ENCODE measurements at regions of chr12 and their contacts with region 1.

Region 1: GRCh38 chr12:19431407-19432308 is 7.6 kb upstream of the AEBP2 start:
- DNase-seq: peak; percentile 78
- H3K4me3 Mint-ChIP-seq: no peak overlapping the region
- H3K27ac Mint-ChIP-seq: peak overlapping the region; percentile 99
- H3K4me1 Mint-ChIP-seq: peaks cover 33% of the 10 kb centered on the region
- H3K27me3 Mint-ChIP-seq: no peaks in the 10 kb centered on the region

Region 2: GRCh38 chr12:19129486-19130223 is 302.0 kb before region 1 on chr12 and contains the start of gene PLEKHA5:
- CTCF ChIA-PET with region 1: no interaction called
- POLR2A ChIA-PET with region 1: no interaction called
- intact Hi-C with region 1: loop called (anchors 5 kb)
- DNase-seq: peak; percentile 56
- H3K4me3 Mint-ChIP-seq: peak within 1 kb of the TSS; percentile 86
- H3K27ac Mint-ChIP-seq: no peak within 1 kb of the TSS
- H3K4me1 Mint-ChIP-seq: peaks cover 23% of the 10 kb centered on the region
- H3K27me3 Mint-ChIP-seq: peaks cover 3% of the 10 kb centered on the region
- total RNA-seq, gene PLEKHA5: 6.6 to 7.4 TPM

Region 3: GRCh38 chr12:19382111-19382526 is 49.5 kb before region 1 on chr12:
- CTCF ChIA-PET with region 1: interaction called, 3 read pairs
- POLR2A ChIA-PET with region 1: interaction called, 11 read pairs
- intact Hi-C with region 1: loop called (anchors 1 kb)
- DNase-seq: peak; percentile 81
- H3K4me3 Mint-ChIP-seq: no peak overlapping the region
- H3K27ac Mint-ChIP-seq: peak overlapping the region; percentile 18
- H3K4me1 Mint-ChIP-seq: peaks cover 16% of the 10 kb centered on the region
- H3K27me3 Mint-ChIP-seq: no peaks in the 10 kb centered on the region

Region 4: DNA sequence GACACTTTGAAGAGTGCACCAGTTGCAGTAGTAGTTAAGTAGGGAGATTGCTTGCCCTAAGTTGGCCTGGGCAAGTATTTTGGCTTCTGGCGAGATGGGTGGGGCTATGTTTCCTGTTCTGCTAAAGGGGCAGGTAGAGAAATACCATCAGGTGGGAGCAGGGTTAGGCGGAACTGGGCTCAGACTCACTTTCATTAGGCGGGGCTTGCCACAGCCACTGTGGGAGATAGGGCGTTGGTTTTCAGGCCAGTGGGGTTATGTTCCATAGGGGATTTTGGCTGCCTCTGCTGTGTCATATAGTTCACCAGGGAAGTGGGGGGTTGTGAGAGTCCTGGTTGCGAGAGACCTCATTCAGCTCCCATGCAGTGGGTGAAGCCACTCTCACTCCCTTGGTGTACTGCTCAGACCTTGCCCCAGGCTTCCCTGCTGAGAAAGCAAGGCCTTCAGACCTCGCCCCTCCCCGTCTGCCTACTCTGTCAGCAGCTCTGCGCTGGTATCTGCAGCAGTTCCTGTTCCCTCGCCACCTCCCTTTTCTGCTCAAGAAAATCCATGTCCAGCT is 51.0 kb after region 1 on chr12:
- CTCF ChIA-PET with region 1: no interaction called
- POLR2A ChIA-PET with region 1: interaction called, 8 read pairs
- intact Hi-C with region 1: loop called (anchors 2 kb)
- DNase-seq: peak; percentile 85
- H3K4me3 Mint-ChIP-seq: peak overlapping the region; percentile 30
- H3K27ac Mint-ChIP-seq: peak overlapping the region; percentile 77
- H3K4me1 Mint-ChIP-seq: peaks cover 59% of the 10 kb centered on the region
- H3K27me3 Mint-ChIP-seq: no peaks in the 10 kb centered on the region

Region 5: DNA sequence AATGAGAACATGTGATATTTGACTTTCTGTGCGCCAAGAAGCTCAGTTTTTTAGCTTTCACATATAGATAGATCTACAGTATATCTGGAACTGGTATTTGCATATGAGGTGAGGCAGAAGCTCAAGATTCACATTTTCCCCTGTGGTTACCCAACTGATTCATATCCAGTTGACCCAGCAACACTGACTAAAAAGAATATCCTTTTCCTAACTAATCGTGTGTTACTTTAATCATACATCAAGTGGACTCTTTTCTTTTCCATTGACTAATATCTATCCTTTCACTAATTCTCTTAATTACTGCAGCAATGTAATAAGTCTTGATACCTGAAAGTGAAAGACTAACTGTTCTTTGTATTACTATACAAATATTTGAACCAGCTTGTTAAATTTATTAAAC is 243.7 kb after region 1 on chr12:
- CTCF ChIA-PET with region 1: no interaction called
- POLR2A ChIA-PET with region 1: no interaction called
- intact Hi-C with region 1: loop called (anchors 1 kb)
- DNase-seq: no peak
- H3K4me3 Mint-ChIP-seq: no peak overlapping the region
- H3K27ac Mint-ChIP-seq: no peak overlapping the region
- H3K4me1 Mint-ChIP-seq: peaks cover 32% of the 10 kb centered on the region
- H3K27me3 Mint-ChIP-seq: no peaks in the 10 kb centered on the region

Region 6: GRCh38 chr12:19893514-19893913 is 461.9 kb after region 1 on chr12:
- CTCF ChIA-PET with region 1: no interaction called
- POLR2A ChIA-PET with region 1: interaction called, 3 read pairs
- intact Hi-C with region 1: loop called (anchors 5 kb)
- DNase-seq: no peak
- H3K4me3 Mint-ChIP-seq: no peak overlapping the region
- H3K27ac Mint-ChIP-seq: no peak overlapping the region
- H3K4me1 Mint-ChIP-seq: peaks cover 20% of the 10 kb centered on the region
- H3K27me3 Mint-ChIP-seq: no peaks in the 10 kb centered on the region

Region 7: GRCh38 chr12:19988459-19988873 is 556.8 kb after region 1 on chr12:
- CTCF ChIA-PET with region 1: no interaction called
- POLR2A ChIA-PET with region 1: no interaction called
- intact Hi-C with region 1: no loop called
- DNase-seq: no peak
- H3K4me3 Mint-ChIP-seq: no peak overlapping the region
- H3K27ac Mint-ChIP-seq: no peak overlapping the region
- H3K4me1 Mint-ChIP-seq: no peaks in the 10 kb centered on the region
- H3K27me3 Mint-ChIP-seq: no peaks in the 10 kb centered on the region

Measured in activated CD4-positive, alpha-beta memory T cell treated with anti-CD3 and anti-CD28 coated beads for 36 hours (primary cell).